Naive thymus-derived CD4-positive, alpha-beta T cell (primary cell): ENCODE measurements at regions of chr4 and their contacts with region 1.

Region 1: GRCh38 chr4:4488405-4489404 is 53.1 kb downstream of the STX18 start:
- DNase-seq: peak; percentile 29 to 65 (median 56)
- ATAC-seq: peak; percentile 97
- H3K4me3 ChIP-seq: no peak overlapping the region
- H3K4me3 Mint-ChIP-seq: no peak overlapping the region
- H3K27ac ChIP-seq: no peak overlapping the region
- H3K27ac Mint-ChIP-seq: no peak overlapping the region
- H3K4me1 ChIP-seq: no peaks in the 10 kb centered on the region
- H3K4me1 Mint-ChIP-seq: peaks cover 2 to 18% (median 8%) of the 10 kb centered on the region in 7 donors
- H3K27me3 ChIP-seq: no peaks in the 10 kb centered on the region
- H3K27me3 Mint-ChIP-seq: no peaks in the 10 kb centered on the region

Region 2: DNA sequence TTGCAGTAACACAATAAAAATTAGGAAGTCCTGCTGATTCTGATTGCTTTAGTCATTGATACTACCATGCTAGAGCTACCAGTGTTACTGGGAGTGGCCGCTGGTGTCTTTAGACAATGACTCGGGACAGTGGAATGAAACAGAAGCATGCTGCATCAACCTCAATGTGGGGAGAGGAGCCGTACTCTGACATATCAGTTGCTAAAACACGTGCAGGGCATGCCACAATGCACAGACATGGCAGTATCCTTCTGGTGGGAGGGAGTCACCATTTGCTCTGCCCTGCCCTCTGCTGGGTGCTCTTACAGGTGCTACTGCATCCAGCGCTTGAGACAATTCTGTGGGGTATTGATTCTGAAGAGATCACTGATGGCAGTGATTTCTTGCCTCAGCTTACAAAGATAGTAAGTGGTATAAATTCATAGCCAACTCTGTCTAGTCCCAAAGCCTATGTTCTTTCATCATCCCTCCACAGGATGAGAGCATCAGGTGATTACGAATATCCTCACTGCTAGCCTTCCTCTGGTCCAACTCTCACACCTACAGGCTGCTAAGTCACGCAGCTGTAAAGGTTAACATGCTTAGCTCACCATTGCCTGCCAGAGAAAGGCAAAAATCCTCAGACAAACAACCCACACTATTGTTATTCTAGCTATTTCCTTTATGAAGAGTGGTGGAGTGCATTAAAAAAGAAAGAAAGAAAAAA is 58.1 kb before region 1 on chr4:
- CTCF ChIA-PET with region 1: no interaction called
- POLR2A ChIA-PET with region 1: no interaction called
- intact Hi-C with region 1: no loop called
- DNase-seq: peak in 8 of 9 donors; percentile 11 to 53 (median 35)
- ATAC-seq: peak; percentile 87
- H3K4me3 ChIP-seq: no peak overlapping the region
- H3K4me3 Mint-ChIP-seq: no peak overlapping the region
- H3K27ac ChIP-seq: no peak overlapping the region
- H3K27ac Mint-ChIP-seq: no peak overlapping the region
- H3K4me1 ChIP-seq: no peaks in the 10 kb centered on the region
- H3K4me1 Mint-ChIP-seq: peaks cover 0 to 6% (median 3%) of the 10 kb centered on the region in 7 donors
- H3K27me3 ChIP-seq: no peaks in the 10 kb centered on the region
- H3K27me3 Mint-ChIP-seq: no peaks in the 10 kb centered on the region

Region 3: DNA sequence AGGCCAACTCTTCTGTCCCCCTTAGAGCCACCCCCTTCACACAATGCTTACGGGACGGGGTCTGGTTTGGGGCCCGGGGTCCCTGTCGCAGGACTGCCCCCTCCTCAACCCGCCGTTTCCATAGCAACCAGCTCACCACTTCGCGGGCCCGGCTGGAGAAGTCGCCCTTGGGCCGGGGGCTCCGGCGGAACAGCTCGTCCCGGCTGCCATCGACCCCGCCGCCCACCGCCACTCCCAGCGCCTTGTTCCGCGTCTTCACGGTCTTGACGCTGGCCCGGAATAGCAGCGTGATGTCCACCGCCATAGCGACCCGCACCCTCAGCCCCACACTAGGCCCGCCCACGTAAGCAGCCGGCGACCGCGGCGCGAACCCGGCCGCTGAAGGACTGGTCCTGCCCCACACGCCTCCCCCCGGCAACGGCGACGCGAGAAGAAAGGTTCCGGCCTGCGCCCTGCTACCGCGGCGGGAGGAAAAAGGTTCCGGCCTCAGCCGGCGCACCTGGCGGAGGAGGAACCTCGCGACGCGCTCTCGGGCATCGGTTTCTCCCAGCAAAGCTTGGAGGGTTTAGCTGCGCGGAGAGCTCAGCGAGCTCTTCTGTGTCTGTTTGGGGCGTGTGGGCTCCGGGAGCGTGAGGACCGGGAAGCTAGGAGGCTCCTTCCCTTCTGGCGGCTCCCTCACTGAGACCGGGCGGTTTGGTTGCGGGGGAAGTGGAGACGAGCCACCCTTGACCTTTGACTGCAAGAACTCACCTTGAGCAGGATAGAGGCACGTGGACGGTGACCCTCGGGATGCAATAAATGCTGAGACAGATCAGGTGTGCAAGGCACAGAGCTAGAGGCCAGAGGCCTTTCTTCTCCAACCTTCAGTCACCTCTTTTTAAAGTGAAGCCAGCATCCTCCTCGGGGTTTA is 53.2 kb after region 1 on chr4 and contains the start of gene STX18:
- CTCF ChIA-PET with region 1: interaction called, 3 read pairs
- POLR2A ChIA-PET with region 1: no interaction called
- intact Hi-C with region 1: loop called in 1 of 2 experiments (anchors 5 kb)
- DNase-seq: peak; percentile 76 to 94 (median 84)
- ATAC-seq: peak; percentile 95
- H3K4me3 ChIP-seq: peak within 1 kb of the TSS; percentile 91
- H3K4me3 Mint-ChIP-seq: peak within 1 kb of the TSS; percentile 93 to 99 (median 98)
- H3K27ac ChIP-seq: peak within 1 kb of the TSS; percentile 77
- H3K27ac Mint-ChIP-seq: peak within 1 kb of the TSS; percentile 88 to 97 (median 95)
- H3K4me1 ChIP-seq: peaks cover 18 to 22% of the 10 kb centered on the region in 2 donors
- H3K4me1 Mint-ChIP-seq: peaks cover 34 to 76% (median 61%) of the 10 kb centered on the region in 7 donors
- H3K27me3 ChIP-seq: no peaks in the 10 kb centered on the region
- H3K27me3 Mint-ChIP-seq: no peaks in the 10 kb centered on the region
- total RNA-seq, gene STX18: 19.0 to 28.0 (median 22.7) TPM

Region 4: DNA sequence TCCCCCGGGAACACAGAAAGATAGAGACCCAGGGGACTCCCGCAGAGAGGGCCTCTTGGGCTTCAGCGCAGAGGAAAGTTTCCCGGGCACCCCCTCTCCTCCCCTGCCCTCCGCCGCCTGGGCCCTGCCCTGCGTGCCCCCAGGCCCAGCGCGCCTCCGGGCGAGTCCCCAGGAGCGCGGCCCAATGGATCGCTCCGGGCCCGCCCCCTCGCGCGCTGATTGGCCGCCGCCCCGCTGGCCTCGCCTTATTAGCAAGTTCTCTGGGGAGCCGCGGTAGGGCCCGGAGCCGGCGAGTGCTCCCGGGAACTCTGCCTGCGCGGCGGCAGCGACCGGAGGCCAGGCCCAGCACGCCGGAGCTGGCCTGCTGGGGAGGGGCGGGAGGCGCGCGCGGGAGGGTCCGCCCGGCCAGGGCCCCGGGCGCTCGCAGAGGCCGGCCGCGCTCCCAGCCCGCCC is 370.7 kb after region 1 on chr4 and contains the start of gene MSX1:
- CTCF ChIA-PET with region 1: no interaction called
- POLR2A ChIA-PET with region 1: no interaction called
- intact Hi-C with region 1: loop called in 1 of 2 experiments (anchors 2 kb)
- DNase-seq: no peak
- ATAC-seq: peak; percentile 73
- H3K4me3 ChIP-seq: peak within 1 kb of the TSS; percentile 52
- H3K4me3 Mint-ChIP-seq: peak within 1 kb of the TSS; percentile 58 to 92 (median 85)
- H3K27ac ChIP-seq: no peak within 1 kb of the TSS
- H3K27ac Mint-ChIP-seq: peak within 1 kb of the TSS in 1 of 9 donors; percentile 23
- H3K4me1 ChIP-seq: peaks cover 11 to 13% of the 10 kb centered on the region in 2 donors
- H3K4me1 Mint-ChIP-seq: peaks cover 18 to 54% (median 49%) of the 10 kb centered on the region in 7 donors
- H3K27me3 ChIP-seq: peaks cover 18 to 37% of the 10 kb centered on the region in 2 donors
- H3K27me3 Mint-ChIP-seq: peaks cover 68 to 85% (median 82%) of the 10 kb centered on the region in 5 donors
- total RNA-seq, gene MSX1: not detected

Region 5: GRCh38 chr4:4995103-4995907 is 506.6 kb after region 1 on chr4:
- CTCF ChIA-PET with region 1: no interaction called
- POLR2A ChIA-PET with region 1: no interaction called
- intact Hi-C with region 1: loop called in 1 of 2 experiments (anchors 5 kb)
- DNase-seq: peak in 4 of 9 donors; percentile 18 to 42 (median 19)
- ATAC-seq: peak; percentile 72
- H3K4me3 ChIP-seq: no peak overlapping the region
- H3K4me3 Mint-ChIP-seq: no peak overlapping the region
- H3K27ac ChIP-seq: no peak overlapping the region
- H3K27ac Mint-ChIP-seq: no peak overlapping the region
- H3K4me1 ChIP-seq: no peaks in the 10 kb centered on the region
- H3K4me1 Mint-ChIP-seq: peaks cover 0 to 3% (median 0%) of the 10 kb centered on the region in 7 donors
- H3K27me3 ChIP-seq: no peaks in the 10 kb centered on the region
- H3K27me3 Mint-ChIP-seq: peaks cover 0 to 29% (median 14%) of the 10 kb centered on the region in 5 donors

Region 6: DNA sequence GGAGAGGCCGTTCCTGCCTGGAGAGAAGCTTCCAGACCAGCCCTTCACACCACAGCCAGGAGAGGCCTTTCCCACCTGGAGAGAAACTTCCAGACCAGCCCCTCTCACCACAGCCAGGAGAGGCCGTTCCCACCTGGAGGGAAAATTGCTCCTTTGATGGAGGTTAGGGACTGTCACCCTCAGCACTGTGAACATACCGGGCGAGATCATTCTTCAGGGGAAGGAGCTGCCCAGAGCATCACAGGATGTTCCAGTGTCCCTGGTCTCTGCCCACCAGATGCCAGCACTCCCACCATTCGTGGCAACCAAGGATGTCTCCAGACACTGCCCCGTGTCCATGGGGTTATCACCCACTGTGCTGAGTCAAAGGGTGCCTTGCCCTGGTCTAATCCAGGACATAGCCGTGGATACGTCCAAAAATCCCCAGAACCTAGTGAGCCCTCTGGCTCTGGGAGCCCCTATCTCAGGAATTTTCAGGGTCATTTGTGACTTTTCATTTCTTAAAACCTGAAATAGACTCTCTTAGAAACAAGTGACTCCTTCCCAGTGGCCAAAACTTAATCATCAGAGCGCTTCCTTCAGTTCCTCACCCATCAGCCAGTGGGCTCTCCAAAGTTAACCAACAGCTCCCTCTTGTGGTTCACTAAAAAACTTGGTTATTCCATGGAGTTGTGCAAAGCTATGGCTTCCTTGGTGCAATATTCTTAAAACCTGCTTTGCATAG is 1324.0 kb after region 1 on chr4:
- CTCF ChIA-PET with region 1: no interaction called
- POLR2A ChIA-PET with region 1: no interaction called
- intact Hi-C with region 1: loop called in 1 of 2 experiments (anchors 10 kb)
- DNase-seq: peak in 4 of 9 donors; percentile 13 to 32 (median 14)
- ATAC-seq: peak; percentile 51
- H3K4me3 ChIP-seq: no peak overlapping the region
- H3K4me3 Mint-ChIP-seq: no peak overlapping the region
- H3K27ac ChIP-seq: no peak overlapping the region
- H3K27ac Mint-ChIP-seq: no peak overlapping the region
- H3K4me1 ChIP-seq: no peaks in the 10 kb centered on the region
- H3K4me1 Mint-ChIP-seq: no peaks in the 10 kb centered on the region
- H3K27me3 ChIP-seq: no peaks in the 10 kb centered on the region
- H3K27me3 Mint-ChIP-seq: peaks cover 0 to 11% (median 0%) of the 10 kb centered on the region in 5 donors